Activated CD4-positive, alpha-beta memory T cell treated with anti-CD3 and anti-CD28 coated beads, Interleukin-2, amount 10 ng/mL, durations not matched to agents 7 days and 5 days (primary cell): ENCODE measurements at regions of chr12 and their contacts with region 1.

Region 1: GRCh38 chr12:94207849-94208621 is 59.7 kb downstream of the PLXNC1 start:
- DNase-seq: peak; percentile 48
- H3K4me3 Mint-ChIP-seq: peak overlapping the region; percentile 68
- H3K27ac Mint-ChIP-seq: peak overlapping the region; percentile 96
- H3K4me1 Mint-ChIP-seq: peaks cover 67% of the 10 kb centered on the region
- H3K27me3 Mint-ChIP-seq: no peaks in the 10 kb centered on the region

Region 2: GRCh38 chr12:93979189-93979588 is 228.8 kb before region 1 on chr12:
- CTCF ChIA-PET with region 1: no interaction called
- POLR2A ChIA-PET with region 1: no interaction called
- DNase-seq: peak; percentile 37
- H3K4me3 Mint-ChIP-seq: no peak overlapping the region
- H3K27ac Mint-ChIP-seq: no peak overlapping the region
- H3K4me1 Mint-ChIP-seq: peaks cover 30% of the 10 kb centered on the region
- H3K27me3 Mint-ChIP-seq: peaks cover 6% of the 10 kb centered on the region

Region 3: DNA sequence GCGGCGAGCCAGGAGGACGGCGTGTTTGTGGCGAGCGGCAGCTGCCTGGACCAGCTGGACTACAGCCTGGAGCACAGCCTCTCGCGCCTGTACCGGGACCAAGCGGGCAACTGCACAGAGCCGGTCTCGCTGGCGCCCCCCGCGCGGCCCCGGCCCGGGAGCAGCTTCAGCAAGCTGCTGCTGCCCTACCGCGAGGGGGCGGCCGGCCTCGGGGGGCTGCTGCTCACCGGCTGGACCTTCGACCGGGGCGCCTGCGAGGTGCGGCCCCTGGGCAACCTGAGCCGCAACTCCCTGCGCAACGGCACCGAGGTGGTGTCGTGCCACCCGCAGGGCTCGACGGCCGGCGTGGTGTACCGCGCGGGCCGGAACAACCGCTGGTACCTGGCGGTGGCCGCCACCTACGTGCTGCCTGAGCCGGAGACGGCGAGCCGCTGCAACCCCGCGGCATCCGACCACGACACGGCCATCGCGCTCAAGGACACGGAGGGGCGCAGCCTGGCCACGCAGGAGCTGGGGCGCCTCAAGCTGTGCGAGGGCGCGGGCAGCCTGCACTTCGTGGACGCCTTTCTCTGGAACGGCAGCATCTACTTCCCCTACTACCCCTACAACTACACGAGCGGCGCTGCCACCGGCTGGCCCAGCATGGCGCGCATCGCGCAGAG is 58.8 kb before region 1 on chr12:
- CTCF ChIA-PET with region 1: interaction called, 7 read pairs
- POLR2A ChIA-PET with region 1: interaction called, 70 read pairs
- DNase-seq: peak; percentile 49
- H3K4me3 Mint-ChIP-seq: peak overlapping the region; percentile 90
- H3K27ac Mint-ChIP-seq: no peak overlapping the region
- H3K4me1 Mint-ChIP-seq: peaks cover 24% of the 10 kb centered on the region
- H3K27me3 Mint-ChIP-seq: peaks cover 42% of the 10 kb centered on the region

Region 4: GRCh38 chr12:94172973-94173372 is 35.1 kb before region 1 on chr12:
- CTCF ChIA-PET with region 1: interaction called, 4 read pairs
- POLR2A ChIA-PET with region 1: interaction called, 18 read pairs
- DNase-seq: no peak
- H3K4me3 Mint-ChIP-seq: no peak overlapping the region
- H3K27ac Mint-ChIP-seq: no peak overlapping the region
- H3K4me1 Mint-ChIP-seq: peaks cover 60% of the 10 kb centered on the region
- H3K27me3 Mint-ChIP-seq: no peaks in the 10 kb centered on the region

Region 5: DNA sequence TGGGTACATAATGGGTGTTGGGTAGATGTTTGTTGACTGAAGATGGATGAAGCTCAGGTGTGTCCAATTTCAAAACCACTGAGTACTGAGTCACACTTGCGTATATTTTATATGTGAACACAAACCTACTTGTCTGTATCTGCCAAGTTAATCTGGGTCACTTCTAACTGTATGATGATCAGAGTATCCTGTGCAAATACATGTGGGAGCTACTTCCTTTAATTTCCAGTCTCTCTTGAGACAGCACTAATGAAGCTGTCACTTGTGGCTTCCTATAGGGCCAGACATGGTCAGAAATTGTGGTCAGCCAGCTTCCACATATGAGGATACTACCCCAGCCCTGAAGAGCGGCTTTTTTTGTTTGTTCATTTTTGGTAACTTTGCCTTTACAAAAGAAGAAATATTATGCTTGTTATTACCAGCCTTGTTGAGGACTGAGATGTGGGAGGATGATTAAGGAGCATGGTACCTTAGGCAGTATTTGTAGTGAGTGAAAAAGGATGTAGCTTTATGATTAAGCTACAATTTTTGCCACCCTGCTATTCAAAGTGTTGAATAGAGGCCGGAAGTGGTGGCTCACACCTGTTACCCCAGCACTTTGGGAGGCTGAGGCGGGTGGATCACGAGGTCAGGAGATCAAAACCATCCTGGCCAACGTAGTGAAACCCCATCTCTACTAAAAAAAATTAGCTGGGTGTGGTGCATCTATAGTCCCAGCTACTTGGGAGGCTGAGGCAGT is 27.3 kb before region 1 on chr12:
- CTCF ChIA-PET with region 1: interaction called, 3 read pairs
- POLR2A ChIA-PET with region 1: interaction called, 10 read pairs
- DNase-seq: peak; percentile 39
- H3K4me3 Mint-ChIP-seq: no peak overlapping the region
- H3K27ac Mint-ChIP-seq: peak overlapping the region; percentile 58
- H3K4me1 Mint-ChIP-seq: peaks cover 21% of the 10 kb centered on the region
- H3K27me3 Mint-ChIP-seq: no peaks in the 10 kb centered on the region

Region 6: DNA sequence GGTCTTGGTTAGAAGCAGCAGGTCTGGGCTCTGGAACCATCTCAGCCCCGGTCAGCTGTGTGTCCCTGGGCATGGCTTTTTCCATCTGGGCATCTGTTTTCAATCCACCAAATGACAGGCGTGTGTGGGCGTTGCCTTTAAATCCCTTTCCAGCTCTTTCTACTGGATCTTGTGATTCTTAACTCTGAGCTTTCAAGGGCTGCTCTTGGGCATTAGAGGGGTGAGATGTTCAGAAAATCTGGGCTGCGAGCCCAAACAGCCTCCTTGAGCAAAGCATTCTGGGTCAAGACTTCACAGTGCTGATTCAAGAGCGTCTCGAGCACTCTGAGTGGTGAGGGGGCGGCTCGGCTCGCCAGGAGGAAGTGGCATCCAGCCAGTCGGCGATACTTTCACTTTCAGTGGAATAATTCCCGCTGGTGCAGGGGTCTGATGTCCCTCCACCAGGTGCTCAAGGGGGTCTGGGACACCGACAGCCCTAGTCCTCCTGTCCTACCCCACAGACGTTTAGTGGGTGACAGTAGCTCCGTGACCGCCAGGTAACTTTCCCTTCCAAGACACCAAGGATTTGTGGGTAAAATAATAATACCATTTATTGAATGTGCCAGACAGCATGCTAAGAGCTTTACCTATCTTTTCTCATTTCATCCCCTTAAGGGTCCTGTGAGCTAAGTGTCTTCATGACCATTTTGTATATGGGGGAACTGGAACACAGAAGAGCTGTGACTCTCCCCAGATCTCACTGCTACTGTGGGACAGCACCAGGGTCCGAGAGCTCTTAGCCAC is 54.4 kb after region 1 on chr12:
- CTCF ChIA-PET with region 1: interaction called, 9 read pairs
- POLR2A ChIA-PET with region 1: interaction called, 22 read pairs
- DNase-seq: peak; percentile 66
- H3K4me3 Mint-ChIP-seq: peak overlapping the region; percentile 74
- H3K27ac Mint-ChIP-seq: peak overlapping the region; percentile 75
- H3K4me1 Mint-ChIP-seq: peaks cover 32% of the 10 kb centered on the region
- H3K27me3 Mint-ChIP-seq: no peaks in the 10 kb centered on the region

Region 7: GRCh38 chr12:94305130-94305957 is 97.3 kb after region 1 on chr12:
- CTCF ChIA-PET with region 1: interaction called, 4 read pairs
- POLR2A ChIA-PET with region 1: interaction called, 24 read pairs
- DNase-seq: peak; percentile 76
- H3K4me3 Mint-ChIP-seq: peak overlapping the region; percentile 12
- H3K27ac Mint-ChIP-seq: peak overlapping the region; percentile 73
- H3K4me1 Mint-ChIP-seq: peaks cover 53% of the 10 kb centered on the region
- H3K27me3 Mint-ChIP-seq: no peaks in the 10 kb centered on the region

Region 8: GRCh38 chr12:94459728-94460615 is 251.9 kb after region 1 on chr12 and contains the start of gene CEP83:
- CTCF ChIA-PET with region 1: no interaction called
- POLR2A ChIA-PET with region 1: interaction called, 11 read pairs
- DNase-seq: peak; percentile 97
- H3K4me3 Mint-ChIP-seq: peak within 1 kb of the TSS; percentile 89
- H3K27ac Mint-ChIP-seq: peak within 1 kb of the TSS; percentile 83
- H3K4me1 Mint-ChIP-seq: peaks cover 32% of the 10 kb centered on the region
- H3K27me3 Mint-ChIP-seq: peaks cover 3% of the 10 kb centered on the region
- total RNA-seq, gene CEP83: 12.8 to 15.0 TPM